Activated CD4-positive, alpha-beta memory T cell treated with anti-CD3 and anti-CD28 coated beads for 36 hours (primary cell): ENCODE measurements at regions of chr11 and their contacts with region 1.

Region 1: DNA sequence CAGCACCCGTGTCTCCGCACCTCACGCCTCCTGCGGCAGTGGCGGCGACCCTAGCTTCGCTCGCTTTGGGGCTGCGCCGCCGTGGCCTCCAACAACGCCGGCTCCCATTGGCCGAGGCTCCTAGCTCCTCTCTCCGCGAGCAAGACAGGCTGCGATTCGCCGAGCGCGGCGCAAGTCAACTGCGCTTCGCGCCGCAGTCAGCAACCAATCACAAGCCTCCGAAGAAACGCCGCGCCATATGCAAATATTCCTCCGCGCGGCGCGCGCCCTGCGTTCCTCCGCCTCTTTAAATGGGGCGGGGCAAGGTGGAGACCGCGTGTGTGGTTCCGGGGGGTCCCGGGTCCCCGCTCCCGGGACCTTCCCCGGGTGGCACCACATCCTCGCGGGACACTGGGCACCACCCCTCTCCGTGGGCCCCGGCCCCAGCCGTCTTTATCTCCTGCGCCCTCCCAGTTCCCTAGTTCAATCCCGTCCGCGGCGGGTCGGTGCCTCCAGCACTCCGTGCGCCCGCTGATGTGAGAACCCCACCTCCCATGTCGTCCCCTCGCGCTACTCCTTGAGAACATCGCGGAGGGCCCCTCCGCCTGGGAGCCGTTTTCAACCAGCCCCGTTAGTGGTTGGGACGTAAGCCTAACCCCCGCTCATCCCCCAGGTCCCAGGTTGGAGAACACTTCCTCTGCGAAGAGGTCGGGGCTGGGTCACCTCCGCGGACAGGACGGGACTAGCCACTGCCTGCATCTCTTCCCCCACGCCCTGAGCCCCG is at the start of gene NAP1L4:
- DNase-seq: peak; percentile 98
- H3K4me3 Mint-ChIP-seq: peak within 1 kb of the TSS; percentile 99
- H3K27ac Mint-ChIP-seq: peak within 1 kb of the TSS; percentile 100
- H3K4me1 Mint-ChIP-seq: peaks cover 28% of the 10 kb centered on the region
- H3K27me3 Mint-ChIP-seq: no peaks in the 10 kb centered on the region
- total RNA-seq, gene NAP1L4: 261 to 263 TPM

Region 2: GRCh38 chr11:2870460-2870859 is 122.0 kb before region 1 on chr11:
- CTCF ChIA-PET with region 1: no interaction called
- POLR2A ChIA-PET with region 1: no interaction called
- intact Hi-C with region 1: no loop called
- DNase-seq: no peak
- H3K4me3 Mint-ChIP-seq: no peak overlapping the region
- H3K27ac Mint-ChIP-seq: no peak overlapping the region
- H3K4me1 Mint-ChIP-seq: peaks cover 6% of the 10 kb centered on the region
- H3K27me3 Mint-ChIP-seq: peaks cover 31% of the 10 kb centered on the region

Region 3: GRCh38 chr11:2930704-2931428 is 61.5 kb before region 1 on chr11:
- CTCF ChIA-PET with region 1: interaction called, 7 read pairs
- POLR2A ChIA-PET with region 1: interaction called, 13 read pairs
- intact Hi-C with region 1: loop called (anchors 2 kb)
- DNase-seq: peak; percentile 80
- H3K4me3 Mint-ChIP-seq: peak overlapping the region; percentile 64
- H3K27ac Mint-ChIP-seq: peak overlapping the region; percentile 25
- H3K4me1 Mint-ChIP-seq: peaks cover 33% of the 10 kb centered on the region
- H3K27me3 Mint-ChIP-seq: peaks cover 11% of the 10 kb centered on the region

Region 4: DNA sequence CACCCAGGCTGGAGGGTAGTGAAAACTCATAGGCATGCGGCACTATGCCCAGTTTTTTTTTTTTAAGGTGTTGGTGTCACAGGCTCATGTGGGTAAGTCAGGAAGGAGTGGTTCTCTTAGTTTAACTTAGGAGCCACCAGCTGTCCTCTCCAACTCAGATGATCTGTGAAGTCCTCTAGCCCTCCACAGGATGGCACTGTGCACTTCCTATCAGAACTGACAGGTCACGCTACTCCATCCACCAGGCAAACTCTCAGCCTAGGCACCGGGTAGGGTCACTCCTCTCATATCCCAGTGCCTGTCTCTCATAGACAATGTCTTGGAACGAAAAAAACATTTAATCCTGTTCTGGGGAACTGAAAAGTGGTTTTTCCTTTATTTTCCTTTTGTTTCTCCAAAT is 16.8 kb before region 1 on chr11:
- CTCF ChIA-PET with region 1: interaction called, 24 read pairs
- POLR2A ChIA-PET with region 1: interaction called, 27 read pairs
- intact Hi-C with region 1: loop called (anchors 1 kb)
- DNase-seq: peak; percentile 53
- H3K4me3 Mint-ChIP-seq: no peak overlapping the region
- H3K27ac Mint-ChIP-seq: no peak overlapping the region
- H3K4me1 Mint-ChIP-seq: peaks cover 28% of the 10 kb centered on the region
- H3K27me3 Mint-ChIP-seq: no peaks in the 10 kb centered on the region

Region 5: DNA sequence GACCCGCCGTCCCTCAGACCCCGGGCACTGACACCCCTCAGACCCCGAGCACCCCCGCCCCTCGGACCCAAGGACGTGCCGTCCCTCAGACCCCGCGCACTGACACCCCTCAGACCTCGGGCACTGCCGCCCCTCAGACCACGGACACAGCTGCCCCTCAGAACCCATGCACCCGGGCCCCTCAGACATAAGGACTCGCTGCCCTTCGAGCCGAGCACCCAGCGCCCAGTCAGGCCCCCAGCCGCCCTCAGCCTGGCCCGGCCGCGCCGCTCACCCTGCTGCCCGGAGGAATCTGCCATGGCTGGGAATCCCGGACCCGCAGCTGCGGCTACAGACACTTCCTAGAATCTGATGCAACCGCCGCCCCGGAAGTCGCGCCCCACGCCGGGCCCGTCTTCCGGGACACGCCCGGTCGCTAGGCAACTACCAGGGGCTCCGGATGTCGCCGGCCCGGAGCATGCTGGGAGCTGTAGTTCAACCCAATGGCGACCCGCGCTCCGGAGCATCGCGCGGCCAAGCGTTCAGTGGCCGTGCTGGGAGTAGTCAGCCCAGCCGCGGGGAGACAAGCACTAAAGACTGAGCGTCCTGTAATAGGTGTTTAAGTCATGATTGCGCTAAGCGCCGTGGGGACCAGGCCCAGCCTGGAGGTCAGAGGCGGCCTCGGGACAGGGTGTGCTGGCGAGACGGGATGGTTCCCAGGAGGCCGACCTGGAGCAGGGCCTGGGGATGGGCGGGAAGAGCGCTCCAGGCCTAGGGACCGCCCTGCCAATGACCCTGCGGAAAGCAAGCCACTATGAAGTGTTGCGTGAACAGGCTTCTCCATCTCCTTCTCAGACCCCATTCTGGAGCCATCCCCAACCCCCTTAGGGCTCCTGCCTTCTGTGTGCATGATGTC is 64.9 kb after region 1 on chr11 and contains the start of gene CARS1:
- CTCF ChIA-PET with region 1: no interaction called
- POLR2A ChIA-PET with region 1: interaction called, 3 read pairs
- intact Hi-C with region 1: loop called (anchors 2 kb)
- DNase-seq: peak; percentile 97
- H3K4me3 Mint-ChIP-seq: peak within 1 kb of the TSS; percentile 89
- H3K27ac Mint-ChIP-seq: peak within 1 kb of the TSS; percentile 85
- H3K4me1 Mint-ChIP-seq: peaks cover 36% of the 10 kb centered on the region
- H3K27me3 Mint-ChIP-seq: no peaks in the 10 kb centered on the region
- total RNA-seq, gene CARS1: 94.7 to 97.5 TPM

Region 6: GRCh38 chr11:3109921-3110706 is 117.7 kb after region 1 on chr11:
- CTCF ChIA-PET with region 1: no interaction called
- POLR2A ChIA-PET with region 1: no interaction called
- intact Hi-C with region 1: no loop called
- DNase-seq: peak; percentile 62
- H3K4me3 Mint-ChIP-seq: no peak overlapping the region
- H3K27ac Mint-ChIP-seq: no peak overlapping the region
- H3K4me1 Mint-ChIP-seq: no peaks in the 10 kb centered on the region
- H3K27me3 Mint-ChIP-seq: peaks cover 2% of the 10 kb centered on the region

Region 7: GRCh38 chr11:3797329-3798095 is 805.1 kb after region 1 on chr11 and contains the start of gene NUP98:
- CTCF ChIA-PET with region 1: no interaction called
- POLR2A ChIA-PET with region 1: no interaction called
- intact Hi-C with region 1: loop called (anchors 2 kb)
- DNase-seq: peak; percentile 100
- H3K4me3 Mint-ChIP-seq: peak within 1 kb of the TSS; percentile 90
- H3K27ac Mint-ChIP-seq: peak within 1 kb of the TSS; percentile 96
- H3K4me1 Mint-ChIP-seq: peaks cover 40% of the 10 kb centered on the region
- H3K27me3 Mint-ChIP-seq: no peaks in the 10 kb centered on the region
- total RNA-seq, gene NUP98: 90.6 to 104 TPM